ENCODE measurements at regions of chr9 and their contacts with region 1.

Region 1: DNA sequence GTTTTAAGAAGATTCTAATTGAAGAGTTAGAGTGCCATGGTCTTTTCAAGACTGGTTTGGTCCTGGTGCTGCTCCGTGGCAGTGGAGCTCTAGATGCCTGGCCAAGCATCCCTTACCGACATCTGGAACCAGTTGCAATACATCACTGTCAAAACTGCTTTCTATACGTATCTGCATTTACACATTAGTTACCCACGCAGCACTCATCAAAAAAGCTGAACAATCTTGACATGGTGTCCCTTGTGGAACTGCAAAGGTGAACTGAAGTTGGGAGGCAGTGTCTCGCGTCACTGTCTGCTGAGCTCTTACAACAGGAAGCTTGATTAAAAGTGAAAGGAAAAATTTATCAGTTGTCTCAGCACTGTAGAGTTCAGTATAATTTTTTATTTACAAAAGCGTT is 82.6 kb downstream of the PBX3 start:
- DNase-seq: peak; percentile 20
- ATAC-seq: peak; percentile 95
- H3K4me3 Mint-ChIP-seq: peak overlapping the region; percentile 85
- H3K27ac Mint-ChIP-seq: peak overlapping the region; percentile 88
- H3K4me1 Mint-ChIP-seq: peaks cover 30% of the 10 kb centered on the region
- H3K27me3 Mint-ChIP-seq: no peaks in the 10 kb centered on the region
- CTCF ChIP-seq: no peak

Region 2: DNA sequence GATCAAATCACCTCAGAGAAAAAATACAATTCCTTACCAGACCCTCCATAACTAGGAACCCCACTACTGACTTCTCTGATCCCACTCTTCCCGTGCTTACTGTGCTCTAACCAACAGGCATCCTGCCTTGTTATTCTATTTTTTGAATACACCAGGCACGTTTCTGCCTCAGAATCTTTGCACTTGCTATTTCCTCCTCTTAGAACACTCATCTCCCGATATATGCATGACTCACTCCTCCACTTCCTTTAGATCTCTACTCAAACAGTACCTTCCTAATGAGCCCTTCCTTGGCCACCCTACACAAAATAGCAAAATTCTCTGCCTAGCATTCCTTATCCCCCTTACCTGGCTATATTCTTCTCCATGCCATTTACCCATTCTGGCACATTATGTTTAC is 166.6 kb before region 1 on chr9:
- CTCF ChIA-PET with region 1: no interaction called
- POLR2A ChIA-PET with region 1: no interaction called
- intact Hi-C with region 1: no loop called
- DNase-seq: no peak
- ATAC-seq: no peak
- H3K4me3 Mint-ChIP-seq: no peak overlapping the region
- H3K27ac Mint-ChIP-seq: peak overlapping the region; percentile 39
- H3K4me1 Mint-ChIP-seq: peaks cover 5% of the 10 kb centered on the region
- H3K27me3 Mint-ChIP-seq: no peaks in the 10 kb centered on the region
- CTCF ChIP-seq: no peak

Region 3: GRCh38 chr9:125843646-125844045 is 13.9 kb after region 1 on chr9:
- CTCF ChIA-PET with region 1: interaction called, 3 read pairs
- POLR2A ChIA-PET with region 1: interaction called, 21 read pairs
- intact Hi-C with region 1: loop called (anchors 1 kb)
- DNase-seq: no peak
- ATAC-seq: no peak
- H3K4me3 Mint-ChIP-seq: no peak overlapping the region
- H3K27ac Mint-ChIP-seq: no peak overlapping the region
- H3K4me1 Mint-ChIP-seq: peaks cover 64% of the 10 kb centered on the region
- H3K27me3 Mint-ChIP-seq: no peaks in the 10 kb centered on the region
- CTCF ChIP-seq: no peak

Region 4: DNA sequence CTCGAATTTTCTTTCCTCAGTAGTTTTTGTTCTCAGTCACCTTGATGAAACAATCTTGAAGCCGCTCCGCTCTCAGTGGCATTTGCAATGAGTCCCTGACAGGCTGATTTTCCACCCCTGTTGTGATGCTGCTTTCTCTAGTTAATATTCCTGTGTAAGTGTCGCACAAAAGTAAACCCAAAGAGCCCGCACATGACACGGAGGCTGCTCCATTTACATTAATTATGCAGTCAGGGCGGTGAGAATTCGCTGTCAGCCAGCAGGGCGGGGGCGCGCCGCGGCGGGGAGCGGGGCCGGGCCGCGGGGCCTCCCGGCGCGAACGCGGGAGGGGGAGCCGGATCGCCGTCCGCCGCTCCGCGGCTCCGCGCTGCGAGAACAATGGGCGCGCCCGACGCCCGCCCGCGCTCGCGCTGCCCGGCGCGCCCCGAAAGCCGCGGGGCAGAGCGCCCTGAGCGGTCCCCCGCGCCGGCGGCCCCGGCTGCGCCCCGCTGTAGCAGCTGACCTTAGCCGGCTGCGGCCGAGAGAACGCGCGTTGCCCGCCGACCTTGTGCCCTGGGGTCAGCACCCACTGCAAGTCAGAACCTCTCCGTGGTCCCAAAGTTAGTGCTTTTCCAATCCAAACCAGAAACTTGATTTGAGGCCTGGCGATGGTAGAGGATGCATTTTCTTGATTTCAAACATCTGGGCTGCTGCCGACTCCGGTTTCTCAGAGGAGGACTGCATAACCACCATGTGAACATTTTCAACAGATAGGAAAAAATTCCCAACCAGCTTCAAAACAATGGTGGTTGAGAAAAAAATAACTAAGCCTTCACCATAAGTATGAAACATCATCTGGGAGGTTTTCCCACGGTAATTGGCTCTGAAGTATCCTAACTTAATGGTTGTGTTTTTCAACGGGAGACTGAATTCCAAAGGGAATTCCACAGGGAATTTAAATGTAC is 60.0 kb after region 1 on chr9:
- CTCF ChIA-PET with region 1: no interaction called
- POLR2A ChIA-PET with region 1: interaction called, 4 read pairs
- intact Hi-C with region 1: loop called (anchors 2 kb)
- DNase-seq: peak; percentile 54
- ATAC-seq: peak; percentile 88
- H3K4me3 Mint-ChIP-seq: peak overlapping the region; percentile 87
- H3K27ac Mint-ChIP-seq: no peak overlapping the region
- H3K4me1 Mint-ChIP-seq: peaks cover 23% of the 10 kb centered on the region
- H3K27me3 Mint-ChIP-seq: no peaks in the 10 kb centered on the region
- CTCF ChIP-seq: no peak